ENCODE measurements at regions of chr17 and their contacts with region 1.

Region 1: GRCh38 chr17:2978116-2978515 is 85.3 kb downstream of the OR1D5 start:
- DNase-seq: no peak
- H3K4me3 Mint-ChIP-seq: no peak overlapping the region
- H3K27ac Mint-ChIP-seq: no peak overlapping the region
- H3K4me1 Mint-ChIP-seq: peaks cover 17% of the 10 kb centered on the region
- H3K27me3 Mint-ChIP-seq: no peaks in the 10 kb centered on the region
- CTCF ChIP-seq: no peak

Region 2: GRCh38 chr17:2940352-2940751 is 37.8 kb before region 1 on chr17:
- CTCF ChIA-PET with region 1: interaction called, 10 read pairs
- intact Hi-C with region 1: no loop called
- DNase-seq: peak; percentile 17
- H3K4me3 Mint-ChIP-seq: peak overlapping the region; percentile 57
- H3K27ac Mint-ChIP-seq: peak overlapping the region; percentile 34
- H3K4me1 Mint-ChIP-seq: no peaks in the 10 kb centered on the region
- H3K27me3 Mint-ChIP-seq: no peaks in the 10 kb centered on the region
- CTCF ChIP-seq: no peak

Region 3: DNA sequence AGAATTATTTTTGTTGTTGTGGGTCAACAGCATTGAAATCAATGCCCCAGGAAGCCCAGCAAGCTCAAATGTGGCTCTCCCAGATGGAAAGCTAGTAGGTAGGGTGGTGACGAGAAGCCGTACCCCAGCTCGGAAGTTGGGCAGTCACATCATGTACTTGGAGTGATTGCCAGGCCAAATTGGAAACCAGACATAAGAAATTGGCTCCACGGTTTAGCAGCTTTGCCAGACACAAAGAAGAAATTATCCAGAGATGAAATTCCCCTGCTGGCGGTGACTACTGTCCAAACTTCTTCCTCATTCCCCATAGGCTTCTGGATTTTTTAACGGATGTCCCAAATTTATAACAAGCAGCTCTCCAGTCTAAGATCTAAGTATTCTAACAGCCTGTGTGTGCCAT is 10.6 kb before region 1 on chr17:
- CTCF ChIA-PET with region 1: no interaction called
- intact Hi-C with region 1: no loop called
- DNase-seq: no peak
- H3K4me3 Mint-ChIP-seq: no peak overlapping the region
- H3K27ac Mint-ChIP-seq: no peak overlapping the region
- H3K4me1 Mint-ChIP-seq: peaks cover 15% of the 10 kb centered on the region
- H3K27me3 Mint-ChIP-seq: no peaks in the 10 kb centered on the region
- CTCF ChIP-seq: no peak

Region 4: GRCh38 chr17:3260600-3260999 is 282.5 kb after region 1 on chr17:
- CTCF ChIA-PET with region 1: no interaction called
- intact Hi-C with region 1: no loop called
- DNase-seq: no peak
- H3K4me3 Mint-ChIP-seq: no peak overlapping the region
- H3K27ac Mint-ChIP-seq: no peak overlapping the region
- H3K4me1 Mint-ChIP-seq: no peaks in the 10 kb centered on the region
- H3K27me3 Mint-ChIP-seq: peaks cover 64% of the 10 kb centered on the region
- CTCF ChIP-seq: no peak